B cell (primary cell): ENCODE measurements at regions of chr19 and their contacts with region 1.

Region 1: GRCh38 chr19:16542045-16542909 is at the start of gene CHERP:
- DNase-seq: peak; percentile 97
- ATAC-seq: peak; percentile 81
- H3K4me3 ChIP-seq: peak within 1 kb of the TSS; percentile 76 to 90 (median 88)
- H3K4me3 Mint-ChIP-seq: peak within 1 kb of the TSS; percentile 91
- H3K27ac ChIP-seq: peak within 1 kb of the TSS; percentile 61 to 77
- H3K27ac Mint-ChIP-seq: peak within 1 kb of the TSS; percentile 89
- H3K4me1 ChIP-seq: peaks cover 29 to 52% of the 10 kb centered on the region in 2 donors
- H3K4me1 Mint-ChIP-seq: peaks cover 55% of the 10 kb centered on the region
- H3K27me3 ChIP-seq: no peaks in the 10 kb centered on the region
- H3K27me3 Mint-ChIP-seq: no peaks in the 10 kb centered on the region
- CTCF ChIP-seq: no peak
- total RNA-seq, gene CHERP: 87.3 and 98.9 TPM in 2 replicates

Region 2: DNA sequence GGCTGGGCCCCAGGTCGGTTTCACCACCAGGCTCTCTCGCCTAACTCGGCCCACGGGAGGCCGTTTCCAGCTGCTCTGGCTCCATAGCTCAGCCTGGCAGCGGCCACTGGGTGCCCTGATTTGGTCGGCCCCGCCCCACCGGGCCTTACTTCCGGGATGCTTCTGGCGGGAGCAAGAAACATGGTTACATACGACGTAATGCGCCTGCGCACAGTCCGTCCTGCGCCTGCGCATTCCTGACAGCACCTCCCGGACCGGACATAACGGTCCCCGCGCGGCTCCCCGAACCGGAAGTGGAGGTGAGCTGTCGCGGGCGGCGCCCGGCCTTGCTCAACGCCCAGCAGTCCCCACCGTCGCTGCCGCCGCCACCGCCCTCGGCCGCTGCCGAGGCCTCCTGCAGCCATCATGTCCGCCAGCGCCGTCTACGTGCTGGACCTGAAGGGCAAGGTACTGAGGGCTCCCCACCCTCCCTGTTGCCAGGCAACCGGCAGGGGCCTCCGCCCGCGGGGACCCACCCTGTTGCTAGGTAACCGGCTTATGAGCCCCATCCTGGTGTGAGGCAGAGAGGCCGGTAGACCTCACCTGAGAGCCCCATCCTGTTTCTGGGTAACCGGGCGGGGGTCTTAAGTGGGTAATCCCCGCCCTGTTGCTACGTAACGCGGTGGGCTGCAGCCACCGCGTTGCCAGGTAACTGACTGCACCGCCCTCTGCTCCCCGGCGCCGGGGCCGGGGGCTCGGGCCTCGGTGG is 344.5 kb before region 1 on chr19 and contains the start of gene AP1M1:
- CTCF ChIA-PET with region 1: no interaction called
- POLR2A ChIA-PET with region 1: no interaction called
- intact Hi-C with region 1: loop called (anchors 5 kb)
- DNase-seq: peak; percentile 99
- ATAC-seq: peak; percentile 93
- H3K4me3 ChIP-seq: peak within 1 kb of the TSS; percentile 67 to 92 (median 87)
- H3K4me3 Mint-ChIP-seq: peak within 1 kb of the TSS; percentile 93
- H3K27ac ChIP-seq: peak within 1 kb of the TSS; percentile 66 to 92
- H3K27ac Mint-ChIP-seq: peak within 1 kb of the TSS; percentile 98
- H3K4me1 ChIP-seq: peaks cover 18 to 28% of the 10 kb centered on the region in 2 donors
- H3K4me1 Mint-ChIP-seq: peaks cover 35% of the 10 kb centered on the region
- H3K27me3 ChIP-seq: no peaks in the 10 kb centered on the region
- H3K27me3 Mint-ChIP-seq: no peaks in the 10 kb centered on the region
- CTCF ChIP-seq: no peak
- total RNA-seq, gene AP1M1: 90.4 and 102 TPM in 2 replicates

Region 3: DNA sequence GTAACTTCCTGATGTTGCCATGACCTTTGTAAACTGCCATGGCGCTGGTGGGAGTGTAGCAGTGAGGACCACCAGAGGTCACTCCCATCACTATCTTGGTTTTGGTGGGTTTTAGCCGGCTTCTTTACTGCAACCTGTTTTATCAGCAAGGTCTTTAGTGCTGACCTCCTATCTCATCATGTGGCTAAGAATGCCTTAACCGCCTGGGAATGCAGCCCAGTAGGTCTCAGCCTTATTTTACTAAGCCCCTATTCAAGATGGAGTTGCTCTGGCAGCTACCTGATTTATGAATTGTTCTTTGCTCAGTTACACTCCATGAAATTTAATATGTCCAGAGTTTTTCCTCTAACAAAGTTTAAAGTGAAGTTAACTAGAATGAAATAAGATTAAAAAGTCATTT is 65.9 kb before region 1 on chr19:
- CTCF ChIA-PET with region 1: no interaction called
- POLR2A ChIA-PET with region 1: interaction called, 4 read pairs
- intact Hi-C with region 1: loop called (anchors 1 kb)
- DNase-seq: no peak
- ATAC-seq: no peak
- H3K4me3 ChIP-seq: no peak overlapping the region
- H3K4me3 Mint-ChIP-seq: no peak overlapping the region
- H3K27ac ChIP-seq: no peak overlapping the region
- H3K27ac Mint-ChIP-seq: no peak overlapping the region
- H3K4me1 ChIP-seq: peaks cover 0 to 6% of the 10 kb centered on the region in 2 donors
- H3K4me1 Mint-ChIP-seq: no peaks in the 10 kb centered on the region
- H3K27me3 ChIP-seq: no peaks in the 10 kb centered on the region
- H3K27me3 Mint-ChIP-seq: no peaks in the 10 kb centered on the region
- CTCF ChIP-seq: no peak

Region 4: GRCh38 chr19:16572332-16573211 is 30.3 kb after region 1 on chr19 and contains the start of gene SLC35E1:
- CTCF ChIA-PET with region 1: no interaction called
- POLR2A ChIA-PET with region 1: no interaction called
- intact Hi-C with region 1: loop called (anchors 1 kb)
- DNase-seq: peak; percentile 94
- ATAC-seq: peak; percentile 92
- H3K4me3 ChIP-seq: peak within 1 kb of the TSS; percentile 75 to 97 (median 88)
- H3K4me3 Mint-ChIP-seq: peak within 1 kb of the TSS; percentile 98
- H3K27ac ChIP-seq: peak within 1 kb of the TSS; percentile 79 to 96
- H3K27ac Mint-ChIP-seq: peak within 1 kb of the TSS; percentile 98
- H3K4me1 ChIP-seq: peaks cover 27 to 39% of the 10 kb centered on the region in 2 donors
- H3K4me1 Mint-ChIP-seq: peaks cover 46% of the 10 kb centered on the region
- H3K27me3 ChIP-seq: no peaks in the 10 kb centered on the region
- H3K27me3 Mint-ChIP-seq: no peaks in the 10 kb centered on the region
- CTCF ChIP-seq: no peak
- total RNA-seq, gene SLC35E1: 46.8 and 51.6 TPM in 2 replicates

Region 5: GRCh38 chr19:16628183-16628983 is 86.1 kb after region 1 on chr19 and contains the start of gene MED26:
- CTCF ChIA-PET with region 1: no interaction called
- POLR2A ChIA-PET with region 1: interaction called, 6 read pairs
- intact Hi-C with region 1: loop called (anchors 1 kb)
- DNase-seq: peak; percentile 97
- ATAC-seq: peak; percentile 93
- H3K4me3 ChIP-seq: peak within 1 kb of the TSS; percentile 18 to 93 (median 87)
- H3K4me3 Mint-ChIP-seq: peak within 1 kb of the TSS; percentile 97
- H3K27ac ChIP-seq: peak within 1 kb of the TSS; percentile 87 to 93
- H3K27ac Mint-ChIP-seq: peak within 1 kb of the TSS; percentile 98
- H3K4me1 ChIP-seq: peaks cover 23 to 27% of the 10 kb centered on the region in 2 donors
- H3K4me1 Mint-ChIP-seq: peaks cover 53% of the 10 kb centered on the region
- H3K27me3 ChIP-seq: no peaks in the 10 kb centered on the region
- H3K27me3 Mint-ChIP-seq: no peaks in the 10 kb centered on the region
- CTCF ChIP-seq: no peak
- total RNA-seq, gene MED26: 32.2 and 33.6 TPM in 2 replicates